Heart left ventricle (tissue), 16 donors: ENCODE measurements at regions of chr19 and their contacts with region 1.

Region 1: DNA sequence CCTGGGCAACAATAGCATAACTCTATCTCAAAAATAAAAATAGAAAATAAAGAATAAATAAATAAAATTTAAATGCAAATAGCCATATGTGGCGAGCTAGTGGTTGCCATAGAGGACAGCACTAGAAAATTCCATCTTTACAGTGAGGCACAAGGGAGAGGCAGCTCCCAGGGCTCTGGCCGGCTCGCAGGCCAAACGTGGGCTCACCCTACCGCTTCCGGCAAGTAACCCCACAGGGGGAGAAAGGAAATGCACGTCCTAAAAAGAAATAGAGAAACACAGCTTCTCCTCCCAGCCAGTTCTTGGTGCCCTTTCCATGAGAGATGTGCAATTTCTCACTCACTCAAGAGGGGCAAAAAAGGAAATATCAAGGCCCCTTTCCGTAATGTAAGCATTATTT is 12.4 kb upstream of the GRWD1 start:
- DNase-seq: no peak
- ATAC-seq: no peak
- H3K4me3 ChIP-seq: no peak overlapping the region
- H3K27ac ChIP-seq: no peak overlapping the region
- H3K4me1 ChIP-seq: no peaks in the 10 kb centered on the region
- H3K27me3 ChIP-seq: peaks cover 0 to 10% (median 0%) of the 10 kb centered on the region in 9 donors
- CTCF ChIP-seq: no peak
- POLR2A ChIP-seq: no peak

Region 2: GRCh38 chr19:48340995-48341394 is 92.3 kb before region 1 on chr19:
- intact Hi-C with region 1: loop called in 1 of 10 experiments (anchors 10 kb)
- DNase-seq: no peak
- ATAC-seq: no peak
- H3K4me3 ChIP-seq: no peak overlapping the region
- H3K27ac ChIP-seq: no peak overlapping the region
- H3K4me1 ChIP-seq: no peaks in the 10 kb centered on the region
- H3K27me3 ChIP-seq: no peaks in the 10 kb centered on the region
- CTCF ChIP-seq: no peak
- POLR2A ChIP-seq: no peak